T-cell (primary cell): ENCODE measurements at regions of chr19 and their contacts with region 1.

Region 1: DNA sequence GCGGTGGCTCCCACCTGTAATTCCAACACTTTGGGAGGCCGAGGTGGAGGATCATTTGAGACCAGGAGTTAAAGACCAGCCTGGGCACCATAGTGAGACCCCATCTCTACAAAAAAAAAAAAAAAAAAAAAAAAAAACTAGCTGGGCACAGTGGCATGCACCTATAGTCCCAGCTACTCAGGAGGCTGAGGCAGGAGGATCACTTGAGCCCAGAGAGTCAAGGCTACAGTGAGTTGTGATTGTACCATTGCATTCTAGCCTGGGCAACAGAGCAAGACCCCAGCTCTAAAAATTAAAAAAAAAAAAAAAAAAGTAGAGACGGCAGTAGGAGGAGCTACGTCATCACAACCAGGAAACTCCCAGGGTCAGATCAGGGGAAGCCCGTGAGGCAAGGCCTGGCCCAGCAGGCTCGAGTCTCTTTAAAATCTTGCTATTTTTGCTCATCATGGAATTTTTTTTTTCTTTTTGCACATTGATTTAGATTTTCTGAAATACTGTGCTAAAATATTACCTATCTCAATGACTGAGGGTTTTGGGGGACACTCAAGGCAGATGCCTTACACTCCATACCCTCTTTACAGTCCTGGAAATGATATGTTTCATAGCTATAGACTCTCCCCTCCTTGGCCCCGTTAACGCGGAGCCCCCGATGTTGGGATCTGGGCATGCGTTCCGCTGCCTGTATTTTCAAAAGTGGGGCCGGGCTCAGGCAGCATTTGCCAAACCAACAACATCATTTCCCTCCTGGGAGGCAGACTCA is 44.4 kb upstream of the USE1 start:
- DNase-seq: peak in 1 of 35 experiments; percentile 49
- ATAC-seq: peak in 1 of 4 experiments; percentile 67
- H3K4me3 ChIP-seq: no peak overlapping the region
- H3K4me3 Mint-ChIP-seq: no peak overlapping the region
- H3K27ac ChIP-seq: no peak overlapping the region
- H3K27ac Mint-ChIP-seq: peak overlapping the region in 1 of 2 donors; percentile 39
- H3K4me1 ChIP-seq: no peaks in the 10 kb centered on the region
- H3K4me1 Mint-ChIP-seq: peaks cover 0 to 2% (median 0%) of the 10 kb centered on the region in 3 donors
- H3K27me3 ChIP-seq: no peaks in the 10 kb centered on the region
- H3K27me3 Mint-ChIP-seq: no peaks in the 10 kb centered on the region

Region 2: GRCh38 chr19:16477316-16477715 is 693.4 kb before region 1 on chr19:
- CTCF ChIA-PET with region 1: no interaction called
- POLR2A ChIA-PET with region 1: interaction called in 1 of 2 experiments, 13 read pairs
- DNase-seq: no peak
- ATAC-seq: no peak
- H3K4me3 ChIP-seq: no peak overlapping the region
- H3K4me3 Mint-ChIP-seq: no peak overlapping the region
- H3K27ac ChIP-seq: no peak overlapping the region
- H3K27ac Mint-ChIP-seq: no peak overlapping the region
- H3K4me1 ChIP-seq: peaks cover 0 to 3% of the 10 kb centered on the region in 2 experiments
- H3K4me1 Mint-ChIP-seq: no peaks in the 10 kb centered on the region
- H3K27me3 ChIP-seq: no peaks in the 10 kb centered on the region
- H3K27me3 Mint-ChIP-seq: peaks cover 0 to 4% of the 10 kb centered on the region in 2 donors

Region 3: DNA sequence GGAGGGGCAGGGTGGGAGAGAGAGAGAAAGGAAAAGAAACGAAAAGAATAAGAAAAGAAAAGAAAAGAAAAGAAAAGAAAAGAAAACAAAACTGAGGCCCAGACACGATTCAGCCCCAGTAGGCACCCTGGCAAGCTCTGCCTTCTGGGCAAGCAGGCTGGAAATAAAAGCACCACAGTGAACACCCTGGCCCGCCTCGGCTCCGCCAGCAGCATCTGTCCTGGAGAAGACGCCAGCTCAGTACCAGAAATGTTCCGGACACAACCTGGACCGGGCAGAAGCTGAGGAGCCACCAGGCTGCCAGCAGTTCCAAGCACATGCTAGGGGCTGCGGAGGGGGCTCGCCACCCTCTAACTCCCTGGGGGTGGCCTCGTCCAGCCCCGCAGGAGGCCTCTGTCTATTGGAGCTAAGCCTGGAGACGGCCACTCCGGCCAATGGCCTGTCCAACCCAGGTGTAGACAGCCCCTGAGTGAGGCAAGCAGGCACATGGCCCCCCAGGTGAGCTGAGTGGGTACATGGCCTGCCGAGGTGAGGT is 132.7 kb before region 1 on chr19:
- CTCF ChIA-PET with region 1: no interaction called
- POLR2A ChIA-PET with region 1: interaction called in 1 of 2 experiments, 10 read pairs
- DNase-seq: no peak
- ATAC-seq: no peak
- H3K4me3 ChIP-seq: no peak overlapping the region
- H3K4me3 Mint-ChIP-seq: no peak overlapping the region
- H3K27ac ChIP-seq: no peak overlapping the region
- H3K27ac Mint-ChIP-seq: no peak overlapping the region
- H3K4me1 ChIP-seq: no peaks in the 10 kb centered on the region
- H3K4me1 Mint-ChIP-seq: no peaks in the 10 kb centered on the region
- H3K27me3 ChIP-seq: peaks cover 0 to 50% of the 10 kb centered on the region in 2 experiments
- H3K27me3 Mint-ChIP-seq: peaks cover 7 to 20% of the 10 kb centered on the region in 2 donors

Region 4: GRCh38 chr19:17138937-17139598 is 31.6 kb before region 1 on chr19:
- CTCF ChIA-PET with region 1: no interaction called
- POLR2A ChIA-PET with region 1: no interaction called
- DNase-seq: no peak
- ATAC-seq: no peak
- H3K4me3 ChIP-seq: no peak overlapping the region
- H3K4me3 Mint-ChIP-seq: no peak overlapping the region
- H3K27ac ChIP-seq: no peak overlapping the region
- H3K27ac Mint-ChIP-seq: no peak overlapping the region
- H3K4me1 ChIP-seq: peaks cover 0 to 14% of the 10 kb centered on the region in 2 experiments
- H3K4me1 Mint-ChIP-seq: peaks cover 12 to 20% (median 19%) of the 10 kb centered on the region in 3 donors
- H3K27me3 ChIP-seq: no peaks in the 10 kb centered on the region
- H3K27me3 Mint-ChIP-seq: no peaks in the 10 kb centered on the region